Spleen (tissue), 13 donors: ENCODE measurements at regions of chr3 and their contacts with region 1.

Region 1: GRCh38 chr3:4980229-4981159 is 1.3 kb downstream of the BHLHE40 start:
- DNase-seq: peak; percentile 97
- H3K4me3 ChIP-seq: peak overlapping the region; percentile 88 to 99 (median 96)
- H3K27ac ChIP-seq: peak overlapping the region; percentile 94 to 99 (median 98)
- H3K4me1 ChIP-seq: peaks cover 46 to 92% (median 77%) of the 10 kb centered on the region in 6 donors
- H3K27me3 ChIP-seq: no peaks in the 10 kb centered on the region
- CTCF ChIP-seq: peak; percentile 96 to 98 (median 97)
- POLR2A ChIP-seq: no peak

Region 2: DNA sequence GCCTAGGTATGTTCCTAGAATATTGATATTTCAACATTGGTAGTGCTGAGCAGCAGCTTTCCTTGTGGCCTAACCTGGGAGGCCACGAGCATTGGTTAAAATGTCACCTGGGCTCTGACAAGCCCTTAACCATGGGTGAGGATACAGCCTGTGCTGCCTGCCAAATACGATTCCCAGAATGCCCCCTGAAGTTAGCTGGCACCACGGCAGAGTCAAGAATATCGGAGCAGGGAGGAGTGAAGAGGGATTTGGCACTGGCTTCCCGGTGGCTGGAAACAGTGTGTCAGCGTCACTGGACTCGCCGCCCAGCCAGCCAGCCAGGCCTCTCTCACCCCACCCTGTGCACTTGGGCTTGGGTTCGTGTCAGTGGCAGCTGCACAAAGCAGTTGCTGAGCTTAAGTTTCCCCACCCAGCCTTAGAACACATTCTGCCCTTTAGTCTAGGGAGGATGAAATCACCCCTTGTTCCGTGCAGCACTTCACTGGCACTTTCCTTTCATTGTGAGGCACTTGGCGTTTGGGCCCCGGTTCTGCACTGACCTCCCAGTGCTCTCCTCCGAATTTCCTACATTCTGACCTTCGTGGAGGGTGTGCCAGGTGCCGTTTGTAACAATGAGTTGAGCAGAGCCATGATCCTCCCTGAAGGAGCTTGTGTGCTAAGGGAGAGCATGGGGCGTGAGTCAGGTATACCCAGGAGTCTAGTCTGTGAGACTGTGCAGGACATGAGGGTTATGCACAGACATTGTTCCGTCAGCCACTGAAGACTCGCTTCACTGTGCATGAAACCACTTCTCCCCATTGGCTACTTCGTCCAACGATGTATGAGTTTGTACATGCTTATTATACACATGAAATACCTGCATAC is 154.0 kb before region 1 on chr3:
- intact Hi-C with region 1: loop called (anchors 5 kb)
- DNase-seq: no peak
- H3K4me3 ChIP-seq: peak overlapping the region in 1 of 8 donors; percentile 9
- H3K27ac ChIP-seq: peak overlapping the region in 6 of 8 donors; percentile 17 to 50 (median 32)
- H3K4me1 ChIP-seq: peaks cover 36 to 98% (median 76%) of the 10 kb centered on the region in 6 donors
- H3K27me3 ChIP-seq: no peaks in the 10 kb centered on the region
- CTCF ChIP-seq: no peak
- POLR2A ChIP-seq: no peak